Kidney (tissue), 22 donors: ENCODE measurements at regions of chr15 and their contacts with region 1.

Region 1: DNA sequence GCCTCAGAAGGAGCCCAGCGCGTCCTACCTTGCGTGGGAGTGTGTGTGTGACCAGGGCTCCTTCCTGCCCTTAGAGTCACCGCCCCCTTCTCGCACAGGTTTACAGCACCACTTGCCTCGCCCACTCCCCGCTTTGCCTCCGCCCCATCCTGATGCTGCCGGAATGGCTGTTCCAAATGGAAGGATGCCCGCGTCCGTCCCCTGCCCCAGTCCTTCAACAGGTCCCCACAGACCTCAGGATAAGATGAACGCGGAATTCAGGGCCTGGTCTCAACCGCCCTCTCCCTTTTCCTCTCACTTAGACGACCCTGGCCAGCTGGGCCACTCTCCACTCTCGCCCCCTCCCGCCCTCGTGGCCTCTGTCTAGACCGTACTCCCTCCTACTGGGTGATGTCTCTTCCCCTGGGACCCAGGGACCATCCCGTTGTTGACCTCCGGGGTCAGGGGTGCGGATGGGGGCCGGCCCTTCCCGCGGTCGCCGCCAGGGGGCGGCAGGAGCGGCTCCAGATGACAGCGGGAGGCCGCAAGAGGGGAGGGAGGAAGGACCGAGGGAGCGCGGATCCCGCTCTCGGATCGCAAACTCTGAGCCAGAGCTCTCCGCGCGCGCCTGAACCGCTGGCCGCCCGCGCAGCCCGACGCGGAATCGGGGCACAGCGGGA is at the start of gene THSD4:
- DNase-seq: peak; percentile 83 to 92 (median 89)
- H3K4me3 ChIP-seq: peak within 1 kb of the TSS; percentile 38 to 64 (median 54)
- H3K27ac ChIP-seq: peak within 1 kb of the TSS; percentile 33 to 67
- H3K4me1 ChIP-seq: peaks cover 0 to 11% (median 2%) of the 10 kb centered on the region in 3 donors
- H3K27me3 ChIP-seq: no peaks in the 10 kb centered on the region
- CTCF ChIP-seq: peak; percentile 82
- total RNA-seq, gene THSD4: 36.3 TPM

Region 2: DNA sequence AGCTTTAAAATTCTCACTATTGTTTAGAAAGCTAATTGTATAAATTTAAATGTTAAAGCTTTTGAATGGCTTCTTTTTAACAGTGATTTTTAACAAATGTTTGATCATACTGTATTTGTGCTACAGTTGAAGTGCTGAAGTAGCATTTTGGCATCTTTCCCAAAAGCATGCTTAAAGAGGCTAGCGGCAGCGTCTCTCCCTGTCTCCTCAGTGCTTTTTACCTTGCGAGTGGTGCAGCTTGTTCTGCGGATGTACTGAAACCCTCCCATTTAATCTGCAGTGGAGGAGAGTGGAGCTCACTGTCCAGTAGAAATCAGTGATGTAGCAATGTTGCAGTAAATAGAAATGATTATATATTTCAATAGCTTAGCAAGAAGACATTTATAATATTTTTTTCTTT is 178.7 kb before region 1 on chr15:
- intact Hi-C with region 1: no loop called
- DNase-seq: peak in 1 of 5 donors; percentile 6
- H3K4me3 ChIP-seq: no peak overlapping the region
- H3K27ac ChIP-seq: no peak overlapping the region
- H3K4me1 ChIP-seq: no peaks in the 10 kb centered on the region
- H3K27me3 ChIP-seq: no peaks in the 10 kb centered on the region
- CTCF ChIP-seq: no peak

Region 3: DNA sequence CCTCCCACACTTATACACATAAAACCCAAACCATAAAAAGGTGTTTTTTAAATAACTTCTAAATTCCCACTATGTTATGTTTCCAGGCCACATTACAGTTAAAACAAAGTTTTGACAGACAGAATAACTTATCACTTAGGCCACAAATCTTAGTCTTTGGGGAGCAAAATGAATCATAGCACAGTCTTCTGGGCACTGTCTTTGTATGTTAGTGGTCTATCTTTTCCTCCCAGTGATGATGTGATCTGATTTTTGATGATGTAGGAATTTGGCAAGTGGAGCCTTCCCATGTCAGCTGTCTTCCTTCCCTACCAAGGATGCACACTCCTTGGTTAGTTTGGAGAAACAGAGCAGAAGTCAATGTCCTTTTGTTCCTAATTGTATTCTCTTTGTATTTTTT is 67.5 kb after region 1 on chr15:
- intact Hi-C with region 1: no loop called
- DNase-seq: no peak
- H3K4me3 ChIP-seq: no peak overlapping the region
- H3K27ac ChIP-seq: no peak overlapping the region
- H3K4me1 ChIP-seq: no peaks in the 10 kb centered on the region
- H3K27me3 ChIP-seq: no peaks in the 10 kb centered on the region
- CTCF ChIP-seq: no peak

Region 4: DNA sequence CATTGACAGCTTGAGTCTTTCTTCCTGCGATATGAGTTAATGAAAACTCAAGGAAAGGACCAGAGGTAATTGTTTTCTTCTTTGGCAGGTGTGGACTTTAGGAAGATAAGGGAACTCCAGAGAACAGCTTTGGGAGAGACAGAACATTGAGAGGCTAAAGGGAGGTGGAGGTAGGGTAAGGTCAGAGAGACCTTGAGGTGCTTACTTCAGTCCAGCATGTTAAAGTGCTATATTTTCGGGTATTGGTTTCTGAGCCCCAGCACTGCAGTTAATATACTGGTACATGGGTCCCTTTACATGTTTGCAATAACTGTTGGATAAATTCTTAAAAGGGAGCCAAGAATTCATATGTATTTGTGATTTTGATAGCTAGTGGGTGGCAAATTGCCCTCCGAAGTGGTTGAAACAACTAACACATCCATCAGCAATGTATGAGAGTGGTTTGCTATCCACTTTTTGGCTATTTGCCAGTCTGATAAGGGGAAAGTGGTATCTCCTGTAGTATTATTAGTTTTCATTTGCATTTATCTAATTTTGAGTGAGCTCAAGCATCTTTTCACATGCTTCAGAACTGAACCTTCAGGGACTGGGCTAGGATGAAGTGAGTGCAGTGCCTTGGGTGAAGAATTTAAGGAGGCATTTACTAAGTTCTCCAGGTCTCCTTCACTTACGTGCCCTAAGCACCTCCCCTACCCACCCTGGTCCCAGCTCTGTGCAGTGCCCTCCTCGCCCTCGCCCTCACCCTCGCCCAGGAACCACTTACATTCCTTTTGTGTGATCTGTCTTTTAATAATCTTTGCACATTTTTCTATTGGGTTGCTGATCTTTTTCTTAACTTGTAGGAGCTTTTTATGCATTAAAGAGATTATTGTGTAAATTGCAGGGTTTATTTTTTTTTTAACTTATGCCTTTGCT is 322.6 kb after region 1 on chr15:
- intact Hi-C with region 1: loop called (anchors 10 kb)
- DNase-seq: no peak
- H3K4me3 ChIP-seq: no peak overlapping the region
- H3K27ac ChIP-seq: no peak overlapping the region
- H3K4me1 ChIP-seq: peaks cover 0 to 2% (median 0%) of the 10 kb centered on the region in 3 donors
- H3K27me3 ChIP-seq: no peaks in the 10 kb centered on the region
- CTCF ChIP-seq: no peak